PC-3 (cell line): ENCODE measurements at regions of chr15 and their contacts with region 1.

Region 1: GRCh38 chr15:77992356-77993222 is 84.9 kb downstream of the TBC1D2B start:
- DNase-seq: no peak
- ATAC-seq: no peak
- H3K4me3 ChIP-seq: no peak overlapping the region
- H3K27ac ChIP-seq: no peak overlapping the region
- H3K4me1 ChIP-seq: peaks cover 22% of the 10 kb centered on the region
- H3K27me3 ChIP-seq: no peaks in the 10 kb centered on the region
- CTCF ChIP-seq: no peak

Region 2: GRCh38 chr15:77864278-77865078 is 128.1 kb before region 1 on chr15:
- CTCF ChIA-PET with region 1: no interaction called
- POLR2A ChIA-PET with region 1: no interaction called
- intact Hi-C with region 1: no loop called
- DNase-seq: no peak
- ATAC-seq: no peak
- H3K4me3 ChIP-seq: no peak overlapping the region
- H3K27ac ChIP-seq: no peak overlapping the region
- H3K4me1 ChIP-seq: peaks cover 6% of the 10 kb centered on the region
- H3K27me3 ChIP-seq: no peaks in the 10 kb centered on the region
- CTCF ChIP-seq: no peak

Region 3: GRCh38 chr15:77966540-77967290 is 25.9 kb before region 1 on chr15:
- CTCF ChIA-PET with region 1: no interaction called
- POLR2A ChIA-PET with region 1: no interaction called
- intact Hi-C with region 1: loop called (anchors 1 kb)
- DNase-seq: peak; percentile 57
- ATAC-seq: peak; percentile 68; the same call in 1 of the 2 replicates
- H3K4me3 ChIP-seq: no peak overlapping the region
- H3K27ac ChIP-seq: no peak overlapping the region
- H3K4me1 ChIP-seq: no peaks in the 10 kb centered on the region
- H3K27me3 ChIP-seq: no peaks in the 10 kb centered on the region
- CTCF ChIP-seq: peak; percentile 93